Astrocyte of the cerebellum (primary cell): ENCODE measurements at regions of chr2 and their contacts with region 1.

Region 1: GRCh38 chr2:173402405-173402974 is 47.8 kb downstream of the CDCA7 start:
- DNase-seq: peak; percentile 76
- H3K4me3 ChIP-seq: peak overlapping the region; percentile 5
- CTCF ChIP-seq: peak; percentile 83

Region 2: GRCh38 chr2:174341286-174341994 is 939.0 kb after region 1 on chr2:
- in situ Hi-C with region 1: loop called (anchors 25 kb)
- DNase-seq: peak; percentile 60
- H3K4me3 ChIP-seq: no peak overlapping the region
- CTCF ChIP-seq: peak; percentile 98